Activated B cell treated with CpG ODN at 0.5 μM for 24 hours (primary cell): ENCODE measurements at regions of chr2 and their contacts with region 1.

Region 1: DNA sequence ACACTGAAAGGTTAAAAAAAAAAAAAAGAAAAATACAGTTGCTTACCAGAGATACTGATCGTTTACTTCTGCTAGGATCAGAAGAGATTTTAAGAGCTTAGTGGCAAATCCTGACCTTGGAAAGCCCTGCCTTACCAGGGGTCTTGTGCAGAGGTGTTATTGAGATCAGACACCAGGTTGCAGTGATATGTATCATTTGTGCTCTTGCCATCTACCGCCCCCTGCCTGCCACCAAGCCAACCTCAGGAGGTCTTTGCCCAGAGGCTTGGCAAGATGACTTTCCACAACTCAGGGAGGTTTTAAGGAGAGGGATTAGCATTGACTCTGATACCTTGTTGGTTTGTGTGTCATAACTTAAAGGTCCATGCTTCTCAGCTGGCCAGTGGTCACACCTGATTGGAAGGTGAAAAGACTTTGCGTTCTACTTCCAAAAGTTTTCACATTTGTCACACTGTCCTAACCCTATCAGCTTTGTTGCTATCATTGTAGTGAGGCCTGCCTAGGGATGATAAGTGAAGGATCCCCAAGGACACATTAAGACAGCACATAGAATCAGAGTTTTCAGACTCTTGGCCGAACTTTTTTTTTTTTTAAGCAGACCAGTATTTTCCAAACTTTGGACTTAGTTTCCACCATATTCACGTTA is 46.2 kb upstream of the MGAT5 start:
- DNase-seq: peak; percentile 42
- ATAC-seq: peak; percentile 84
- H3K4me3 Mint-ChIP-seq: no peak overlapping the region
- H3K27ac Mint-ChIP-seq: peak overlapping the region; percentile 46
- H3K4me1 Mint-ChIP-seq: peaks cover 9% of the 10 kb centered on the region
- H3K27me3 Mint-ChIP-seq: no peaks in the 10 kb centered on the region
- CTCF ChIP-seq: no peak

Region 2: GRCh38 chr2:133886735-133887660 is 320.7 kb before region 1 on chr2:
- CTCF ChIA-PET with region 1: interaction called, 52 read pairs
- POLR2A ChIA-PET with region 1: no interaction called
- intact Hi-C with region 1: loop called (anchors 5 kb)
- DNase-seq: peak; percentile 36
- ATAC-seq: peak; percentile 70
- H3K4me3 Mint-ChIP-seq: no peak overlapping the region
- H3K27ac Mint-ChIP-seq: no peak overlapping the region
- H3K4me1 Mint-ChIP-seq: peaks cover 10% of the 10 kb centered on the region
- H3K27me3 Mint-ChIP-seq: peaks cover 7% of the 10 kb centered on the region
- CTCF ChIP-seq: no peak

Region 3: DNA sequence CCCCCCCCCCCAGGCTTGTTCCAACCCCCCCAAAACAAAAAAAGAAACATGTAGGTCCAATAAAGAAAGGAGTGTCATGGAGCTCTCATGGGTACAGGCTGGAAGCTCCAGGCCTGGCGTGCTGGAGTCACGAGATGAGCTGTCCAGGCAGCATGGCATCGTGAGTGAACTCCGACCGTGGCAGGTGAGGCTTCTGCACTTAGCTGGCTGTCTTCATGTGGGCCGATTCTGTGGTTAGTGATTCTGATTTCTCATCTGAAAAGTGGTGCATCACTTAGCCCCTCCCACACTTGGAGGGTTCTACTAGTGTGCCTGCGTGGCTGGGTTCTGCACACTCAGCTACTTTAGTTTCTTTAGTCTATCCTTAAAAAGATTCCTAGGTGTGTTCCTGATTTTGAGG is 80.2 kb before region 1 on chr2:
- CTCF ChIA-PET with region 1: interaction called, 6 read pairs
- POLR2A ChIA-PET with region 1: interaction called, 13 read pairs
- intact Hi-C with region 1: no loop called
- DNase-seq: no peak
- ATAC-seq: peak; percentile 59
- H3K4me3 Mint-ChIP-seq: peak overlapping the region; percentile 56
- H3K27ac Mint-ChIP-seq: peak overlapping the region; percentile 65
- H3K4me1 Mint-ChIP-seq: peaks cover 88% of the 10 kb centered on the region
- H3K27me3 Mint-ChIP-seq: no peaks in the 10 kb centered on the region
- CTCF ChIP-seq: no peak

Region 4: DNA sequence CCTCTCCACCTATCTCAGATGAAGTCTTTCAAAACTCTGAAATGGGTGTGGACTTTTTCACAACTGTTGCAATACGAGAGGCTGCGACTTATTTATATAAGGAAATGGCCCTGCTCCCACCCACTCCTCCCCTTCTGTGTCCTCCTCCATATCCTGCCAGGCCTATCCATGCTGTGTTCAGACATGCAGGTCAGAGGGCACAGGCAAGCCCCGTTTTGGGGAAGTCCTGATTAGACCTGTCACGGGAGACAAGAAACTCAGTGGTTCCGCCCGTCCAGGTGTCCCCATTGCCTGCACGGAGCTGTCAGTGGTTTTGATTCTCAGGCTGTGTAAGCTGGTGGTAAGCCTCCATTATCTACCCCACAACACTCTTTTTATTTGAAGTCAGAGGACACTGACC is 53.4 kb before region 1 on chr2:
- CTCF ChIA-PET with region 1: interaction called, 7 read pairs
- POLR2A ChIA-PET with region 1: interaction called, 3 read pairs
- intact Hi-C with region 1: loop called (anchors 5 kb)
- DNase-seq: peak; percentile 36
- ATAC-seq: peak; percentile 56
- H3K4me3 Mint-ChIP-seq: peak overlapping the region; percentile 48
- H3K27ac Mint-ChIP-seq: peak overlapping the region; percentile 79
- H3K4me1 Mint-ChIP-seq: peaks cover 84% of the 10 kb centered on the region
- H3K27me3 Mint-ChIP-seq: no peaks in the 10 kb centered on the region
- CTCF ChIP-seq: no peak

Region 5: GRCh38 chr2:134218930-134219658 is 11.4 kb after region 1 on chr2:
- CTCF ChIA-PET with region 1: interaction called, 11 read pairs
- POLR2A ChIA-PET with region 1: interaction called, 6 read pairs
- intact Hi-C with region 1: no loop called
- DNase-seq: peak; percentile 38
- ATAC-seq: peak; percentile 66
- H3K4me3 Mint-ChIP-seq: peak overlapping the region; percentile 53
- H3K27ac Mint-ChIP-seq: peak overlapping the region; percentile 89
- H3K4me1 Mint-ChIP-seq: peaks cover 71% of the 10 kb centered on the region
- H3K27me3 Mint-ChIP-seq: no peaks in the 10 kb centered on the region
- CTCF ChIP-seq: no peak

Region 6: DNA sequence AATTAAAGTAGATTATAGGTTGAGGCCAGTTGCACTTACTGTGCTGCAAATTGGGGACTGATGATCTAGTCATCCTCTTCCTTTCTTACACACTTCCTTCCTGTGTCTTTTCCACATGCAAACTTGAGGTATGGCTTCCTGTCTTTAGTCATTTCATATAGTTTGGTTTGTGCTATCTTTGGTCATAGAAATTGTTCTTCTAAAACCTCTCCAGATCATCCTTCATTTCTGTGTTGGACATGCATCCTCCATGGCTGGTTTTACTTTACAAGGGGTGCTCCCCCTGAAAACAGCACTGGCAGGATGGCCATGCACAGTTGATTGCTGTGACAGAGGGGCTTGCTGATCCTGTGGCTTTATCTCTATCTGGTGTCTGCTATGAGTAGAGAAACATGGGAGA is 82.7 kb after region 1 on chr2:
- CTCF ChIA-PET with region 1: no interaction called
- POLR2A ChIA-PET with region 1: no interaction called
- intact Hi-C with region 1: no loop called
- DNase-seq: no peak
- ATAC-seq: peak; percentile 49
- H3K4me3 Mint-ChIP-seq: no peak overlapping the region
- H3K27ac Mint-ChIP-seq: no peak overlapping the region
- H3K4me1 Mint-ChIP-seq: no peaks in the 10 kb centered on the region
- H3K27me3 Mint-ChIP-seq: no peaks in the 10 kb centered on the region
- CTCF ChIP-seq: no peak